Colonic mucosa (tissue), 4 donors: ENCODE measurements at regions of chr11 and their contacts with region 1.

Region 1: GRCh38 chr11:11848891-11849746 is 7.3 kb downstream of the USP47 start:
- DNase-seq: peak; percentile 63
- H3K4me3 ChIP-seq: no peak overlapping the region
- H3K27ac ChIP-seq: no peak overlapping the region
- H3K4me1 ChIP-seq: peaks cover 6% of the 10 kb centered on the region
- H3K27me3 ChIP-seq: no peaks in the 10 kb centered on the region
- CTCF ChIP-seq: peak; percentile 69

Region 2: DNA sequence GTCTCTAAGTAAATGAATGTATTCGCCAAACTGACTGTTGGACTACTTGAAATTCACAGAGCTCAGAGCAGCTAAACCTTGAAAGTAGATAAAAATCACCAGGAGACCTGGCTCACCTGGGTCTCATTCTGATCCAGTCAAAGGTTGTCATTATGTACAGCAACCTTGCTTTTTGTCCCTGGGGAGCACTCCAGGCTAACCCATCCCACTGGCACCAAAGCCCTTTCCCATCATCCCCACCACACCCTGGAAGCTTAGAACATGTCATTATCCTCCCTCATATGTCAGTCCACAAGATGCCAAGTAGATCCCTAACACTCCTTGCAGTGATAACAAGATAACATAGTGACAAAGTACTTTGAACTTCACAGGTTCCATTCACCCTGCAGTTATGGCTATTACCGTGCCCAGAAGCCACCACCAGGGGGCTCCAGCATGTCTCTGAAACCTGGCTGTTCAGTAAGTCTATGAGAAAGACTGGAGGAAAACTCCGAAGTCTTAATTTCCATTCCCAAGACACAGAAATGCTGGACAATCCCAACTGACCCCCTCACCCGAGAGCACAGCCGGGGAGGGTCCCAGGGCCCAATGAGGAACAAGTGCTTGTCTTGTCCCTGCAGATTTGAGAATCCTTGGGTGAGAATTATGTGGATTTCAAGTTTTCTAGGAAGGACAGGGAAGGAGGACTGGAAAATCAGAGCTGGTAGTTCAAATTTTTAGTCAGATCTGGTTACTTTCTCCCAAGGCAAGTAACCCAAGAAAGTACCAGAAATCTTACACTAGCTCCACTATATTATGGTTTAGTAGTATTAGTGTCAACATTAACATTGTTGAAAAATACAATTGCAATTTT is 50.3 kb before region 1 on chr11:
- intact Hi-C with region 1: loop called (anchors 2 kb)
- DNase-seq: peak; percentile 88
- H3K4me3 ChIP-seq: no peak overlapping the region
- H3K27ac ChIP-seq: no peak overlapping the region
- H3K4me1 ChIP-seq: no peaks in the 10 kb centered on the region
- H3K27me3 ChIP-seq: no peaks in the 10 kb centered on the region
- CTCF ChIP-seq: peak; percentile 59

Region 3: DNA sequence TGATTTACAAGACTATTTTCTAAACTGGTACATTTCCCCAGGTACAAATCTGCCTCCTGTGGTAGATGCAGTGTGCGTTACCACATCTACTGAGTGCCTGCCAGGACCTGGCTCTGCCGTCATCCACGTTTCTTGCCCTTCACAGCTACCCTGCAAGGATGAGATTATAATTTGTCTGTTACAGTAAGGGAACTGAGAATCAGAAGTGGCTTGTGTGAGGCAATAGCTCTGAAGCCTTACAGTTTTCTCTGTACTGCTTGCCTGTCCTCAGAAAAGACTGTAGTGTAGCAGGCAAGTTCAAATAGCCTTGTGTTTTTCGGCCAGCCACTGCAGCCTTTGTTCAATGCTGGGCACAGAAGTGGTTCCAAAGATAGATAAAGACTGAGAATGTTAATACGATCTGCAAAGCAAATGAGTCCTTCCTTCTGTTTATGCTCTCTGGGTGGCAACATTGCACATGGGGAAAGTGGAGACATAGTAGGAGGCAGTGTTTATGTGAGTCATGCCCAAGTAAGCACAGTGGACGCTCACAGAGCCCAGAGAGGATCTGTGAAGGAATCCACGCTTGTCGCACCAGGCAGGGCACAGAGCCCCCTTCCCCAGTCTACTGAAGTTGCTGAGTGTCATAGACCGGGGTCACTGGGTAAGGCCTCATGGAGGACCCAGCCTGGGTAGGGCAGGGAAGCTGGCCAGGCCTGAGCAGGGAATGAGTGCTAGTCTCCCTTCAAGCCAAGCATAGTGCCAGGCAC is 310.4 kb after region 1 on chr11:
- intact Hi-C with region 1: no loop called
- DNase-seq: no peak
- H3K4me3 ChIP-seq: no peak overlapping the region
- H3K27ac ChIP-seq: peak overlapping the region; percentile 68
- H3K4me1 ChIP-seq: peaks cover 31% of the 10 kb centered on the region
- H3K27me3 ChIP-seq: no peaks in the 10 kb centered on the region
- CTCF ChIP-seq: no peak